Heart right ventricle (tissue), 16 donors: ENCODE measurements at regions of chr20 and their contacts with region 1.

Region 1: DNA sequence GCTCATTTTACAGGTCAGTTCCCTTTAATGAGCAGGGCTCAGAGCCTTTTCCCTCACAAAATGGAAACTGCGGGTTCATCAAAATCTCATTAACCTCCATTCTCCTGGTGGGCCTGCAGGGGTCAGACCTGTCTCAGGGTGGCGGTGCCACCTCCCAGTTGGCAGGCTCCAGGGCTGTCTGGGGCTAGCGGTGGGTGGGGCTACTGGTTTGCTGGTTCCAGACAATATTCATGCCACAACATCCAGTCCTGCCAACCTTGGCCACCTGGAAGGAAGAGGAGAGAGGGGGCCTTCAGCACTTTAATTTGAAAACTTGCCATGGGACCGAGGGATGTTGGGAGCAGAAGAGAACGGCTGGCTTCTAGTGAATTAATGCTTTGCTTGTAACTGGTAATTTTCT is 41.9 kb upstream of the CTNNBL1 start:
- DNase-seq: peak; percentile 26 to 35
- ATAC-seq: peak; percentile 44 to 91 (median 82)
- H3K4me3 ChIP-seq: no peak overlapping the region
- H3K27ac ChIP-seq: no peak overlapping the region
- H3K4me1 ChIP-seq: peaks cover 0 to 17% (median 7%) of the 10 kb centered on the region in 9 donors
- H3K27me3 ChIP-seq: no peaks in the 10 kb centered on the region
- CTCF ChIP-seq: peak; percentile 7 to 59 (median 42)

Region 2: DNA sequence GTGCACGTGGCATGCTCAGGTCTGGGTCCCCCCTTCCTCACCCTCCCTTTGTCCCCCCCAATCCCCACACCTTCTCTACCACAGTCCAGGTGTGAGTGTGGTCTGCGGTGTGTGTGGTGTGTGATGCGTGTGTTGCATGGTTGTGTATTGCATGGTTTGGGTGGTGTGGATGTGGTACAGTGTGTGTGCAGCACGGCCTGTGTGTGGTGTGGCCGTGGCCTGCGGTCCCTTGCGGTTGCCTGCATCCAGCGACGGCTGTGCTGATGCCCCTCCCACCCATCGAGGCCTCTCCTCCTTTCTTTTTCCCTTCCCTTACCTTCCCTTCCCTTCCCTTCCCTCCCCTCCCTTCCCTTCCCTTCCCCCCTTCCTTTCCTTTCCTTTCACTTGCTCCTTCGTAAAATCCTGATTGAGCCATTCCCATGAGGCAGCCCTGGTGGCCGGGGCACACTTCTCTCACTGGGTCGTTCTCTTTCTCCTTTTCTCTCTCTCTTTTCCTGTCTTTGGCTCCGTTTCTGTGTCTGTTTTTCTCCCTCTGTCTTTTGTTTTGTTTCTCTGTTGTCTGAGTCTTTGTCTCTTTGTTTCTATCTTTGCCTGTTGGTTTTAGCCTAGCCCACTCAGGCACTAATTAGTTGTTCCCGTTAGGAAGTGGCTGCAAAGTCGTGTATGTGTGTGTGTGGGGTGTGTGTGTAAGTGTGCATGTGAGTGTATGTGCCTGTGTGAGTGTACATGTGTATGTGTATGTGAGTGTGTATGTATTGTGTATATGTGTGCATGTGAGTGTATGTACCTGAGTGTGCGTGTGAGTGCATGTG is 240.3 kb before region 1 on chr20:
- intact Hi-C with region 1: no loop called
- DNase-seq: no peak
- ATAC-seq: no peak
- H3K4me3 ChIP-seq: peak overlapping the region in 5 of 10 donors; percentile 34 to 51 (median 40)
- H3K27ac ChIP-seq: no peak overlapping the region
- H3K4me1 ChIP-seq: peaks cover 0 to 29% (median 13%) of the 10 kb centered on the region in 9 donors
- H3K27me3 ChIP-seq: peaks cover 0 to 81% (median 60%) of the 10 kb centered on the region in 7 donors
- CTCF ChIP-seq: no peak

Region 3: DNA sequence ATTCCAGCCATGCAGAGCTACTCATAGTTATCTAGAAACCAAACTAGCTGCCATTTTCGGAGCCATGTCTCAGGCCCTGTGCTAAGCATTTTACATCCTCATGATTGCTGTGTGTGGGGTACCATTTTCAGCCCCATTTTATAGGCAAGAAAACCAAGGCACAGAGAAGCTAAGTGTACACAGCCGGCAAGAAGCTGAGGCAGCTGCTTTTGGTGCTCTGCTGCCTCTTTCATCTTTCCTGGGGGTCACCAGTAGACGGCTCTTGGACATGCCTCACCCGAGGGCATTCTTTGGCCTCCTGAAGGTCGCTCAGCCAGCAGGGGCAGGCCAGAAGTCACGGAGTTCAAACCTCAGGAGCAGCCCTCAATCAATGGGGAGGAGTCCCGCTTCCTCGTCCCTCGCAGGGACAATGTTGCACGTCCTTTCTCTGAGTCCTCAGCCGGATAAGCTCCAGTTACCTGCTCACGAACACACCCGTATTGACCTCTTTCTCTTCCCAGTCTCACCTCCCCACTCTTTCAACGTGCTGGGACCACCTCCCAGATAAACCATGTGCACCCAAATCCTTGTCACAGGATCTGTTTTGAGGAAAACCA is 41.6 kb before region 1 on chr20:
- intact Hi-C with region 1: no loop called
- DNase-seq: no peak
- ATAC-seq: no peak
- H3K4me3 ChIP-seq: no peak overlapping the region
- H3K27ac ChIP-seq: no peak overlapping the region
- H3K4me1 ChIP-seq: no peaks in the 10 kb centered on the region
- H3K27me3 ChIP-seq: peaks cover 0 to 21% (median 0%) of the 10 kb centered on the region in 7 donors
- CTCF ChIP-seq: no peak

Region 4: DNA sequence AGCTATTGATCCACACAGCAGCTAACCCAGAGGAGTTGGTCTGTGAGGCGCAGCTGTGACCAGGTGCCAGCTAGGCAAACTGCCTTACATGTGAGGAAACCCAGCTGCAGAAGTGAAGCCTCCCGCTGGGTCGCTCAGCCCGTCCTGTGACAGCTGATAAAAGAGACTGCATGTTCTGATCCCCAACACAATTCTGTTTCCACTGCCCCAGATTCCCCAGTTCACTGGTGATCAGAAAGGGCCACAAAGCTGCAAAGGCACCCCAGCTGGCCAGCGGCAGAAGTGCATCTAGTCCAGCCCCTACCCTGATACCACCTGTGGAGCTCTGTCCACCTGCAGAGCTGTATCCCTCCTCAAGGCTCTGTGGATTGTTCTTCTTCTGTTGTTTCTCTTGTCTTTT is 106.4 kb after region 1 on chr20:
- intact Hi-C with region 1: loop called in 1 of 10 experiments (anchors 10 kb)
- DNase-seq: peak in 1 of 2 donors; percentile 6
- ATAC-seq: peak in 2 of 8 donors; percentile 39 to 75
- H3K4me3 ChIP-seq: no peak overlapping the region
- H3K27ac ChIP-seq: no peak overlapping the region
- H3K4me1 ChIP-seq: peaks cover 0 to 5% (median 0%) of the 10 kb centered on the region in 9 donors
- H3K27me3 ChIP-seq: no peaks in the 10 kb centered on the region
- CTCF ChIP-seq: no peak